ENCODE measurements at regions of chr7 and their contacts with region 1.

Region 1: DNA sequence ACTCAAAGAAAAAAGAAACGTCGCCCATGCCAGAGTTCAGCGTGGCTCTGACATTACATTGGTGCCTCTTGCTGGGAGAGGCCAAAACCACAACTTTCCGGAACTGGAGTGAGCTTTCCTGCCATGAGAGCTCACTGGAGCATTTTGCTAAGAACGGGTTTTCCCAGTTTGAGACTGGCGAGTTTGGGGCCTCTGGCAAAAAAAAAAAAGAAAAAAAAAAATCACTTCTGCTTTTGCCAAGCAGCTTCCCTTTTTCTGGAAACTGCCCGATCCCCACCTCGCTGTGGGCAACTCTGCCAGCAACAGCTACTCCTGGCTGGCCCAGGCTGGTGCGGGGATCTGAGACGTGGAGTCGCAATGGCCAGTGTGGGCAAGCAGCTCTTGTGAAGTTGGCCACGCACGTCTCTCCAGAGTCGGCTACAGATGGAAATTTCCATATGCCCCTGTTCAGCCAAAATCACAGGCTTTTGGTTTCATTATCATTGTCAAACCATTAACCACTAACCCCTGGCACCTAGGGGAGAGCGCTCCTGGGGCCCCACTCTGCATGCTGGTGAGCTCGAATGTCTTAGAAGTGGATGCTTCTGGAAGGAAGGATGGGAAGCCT is 25.7 kb downstream of the PRKAG2 start:
- DNase-seq: peak in 2 of 35 experiments; percentile 9 to 35
- ATAC-seq: peak in 3 of 4 experiments; percentile 6 to 55 (median 30)
- H3K4me3 ChIP-seq: peak overlapping the region; percentile 5 to 9
- H3K4me3 Mint-ChIP-seq: peak overlapping the region; percentile 52 to 70 (median 61)
- H3K27ac ChIP-seq: no peak overlapping the region
- H3K27ac Mint-ChIP-seq: peak overlapping the region in 1 of 2 donors; percentile 68
- H3K4me1 ChIP-seq: peaks cover 0 to 25% of the 10 kb centered on the region in 2 experiments
- H3K4me1 Mint-ChIP-seq: peaks cover 36 to 40% (median 36%) of the 10 kb centered on the region in 3 donors
- H3K27me3 ChIP-seq: no peaks in the 10 kb centered on the region
- H3K27me3 Mint-ChIP-seq: no peaks in the 10 kb centered on the region

Region 2: GRCh38 chr7:151871921-151872320 is 20.7 kb after region 1 on chr7:
- CTCF ChIA-PET with region 1: no interaction called
- POLR2A ChIA-PET with region 1: no interaction called
- DNase-seq: no peak
- ATAC-seq: no peak
- H3K4me3 ChIP-seq: no peak overlapping the region
- H3K4me3 Mint-ChIP-seq: no peak overlapping the region
- H3K27ac ChIP-seq: no peak overlapping the region
- H3K27ac Mint-ChIP-seq: no peak overlapping the region
- H3K4me1 ChIP-seq: peaks cover 3 to 36% of the 10 kb centered on the region in 2 experiments
- H3K4me1 Mint-ChIP-seq: peaks cover 53 to 63% (median 56%) of the 10 kb centered on the region in 3 donors
- H3K27me3 ChIP-seq: no peaks in the 10 kb centered on the region
- H3K27me3 Mint-ChIP-seq: no peaks in the 10 kb centered on the region

Region 3: DNA sequence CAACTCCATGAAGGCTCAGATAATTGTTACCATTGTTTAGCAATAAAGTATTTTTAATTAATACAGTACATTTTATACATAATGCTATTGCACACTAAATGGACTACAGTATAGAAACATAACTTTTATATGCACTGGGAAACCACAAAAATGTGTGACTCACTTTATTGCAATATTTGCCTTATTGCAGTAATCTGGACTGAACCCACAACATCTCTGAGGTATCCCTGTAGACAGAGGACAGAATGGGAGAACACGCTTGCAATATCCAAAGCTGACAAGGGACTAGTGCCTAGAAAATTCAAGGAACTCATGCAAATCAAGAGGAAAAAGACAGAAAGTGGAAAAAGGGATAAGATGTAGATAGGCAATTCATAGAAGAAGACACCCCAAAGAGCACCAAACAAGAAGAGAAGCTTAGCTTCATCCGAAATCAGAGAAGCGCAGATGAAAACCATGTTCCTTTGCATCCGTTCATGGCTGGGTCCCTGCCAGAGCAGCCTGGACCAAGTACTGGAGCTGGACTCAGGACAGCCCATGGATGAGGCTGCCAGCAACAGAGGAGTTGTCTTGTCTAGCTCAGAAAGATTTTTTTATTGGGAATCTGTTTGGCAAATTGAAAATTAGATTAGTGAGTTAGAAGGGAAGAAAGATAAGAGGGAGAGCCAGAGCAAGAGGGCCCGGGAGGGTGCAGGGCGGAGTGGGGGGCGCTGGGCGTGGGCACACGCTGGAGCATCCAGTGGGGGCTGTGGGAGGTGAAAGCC is 89.0 kb after region 1 on chr7:
- CTCF ChIA-PET with region 1: interaction called in 1 of 2 experiments, 10 read pairs
- POLR2A ChIA-PET with region 1: no interaction called
- DNase-seq: no peak
- ATAC-seq: no peak
- H3K4me3 ChIP-seq: no peak overlapping the region
- H3K4me3 Mint-ChIP-seq: no peak overlapping the region
- H3K27ac ChIP-seq: no peak overlapping the region
- H3K27ac Mint-ChIP-seq: no peak overlapping the region
- H3K4me1 ChIP-seq: peaks cover 7 to 14% of the 10 kb centered on the region in 2 experiments
- H3K4me1 Mint-ChIP-seq: peaks cover 17 to 23% (median 23%) of the 10 kb centered on the region in 3 donors
- H3K27me3 ChIP-seq: no peaks in the 10 kb centered on the region
- H3K27me3 Mint-ChIP-seq: peaks cover 1 to 3% of the 10 kb centered on the region in 2 donors

Measured in T-cell (primary cell).